ENCODE measurements at regions of chr21 and their contacts with region 1.

Region 1: GRCh38 chr21:34807146-34807880 is 138.5 kb downstream of the CLIC6 start:
- DNase-seq: peak; percentile 92
- H3K4me3 Mint-ChIP-seq: no peak overlapping the region
- H3K27ac Mint-ChIP-seq: peak overlapping the region; percentile 91
- H3K4me1 Mint-ChIP-seq: peaks cover 91% of the 10 kb centered on the region
- H3K27me3 Mint-ChIP-seq: no peaks in the 10 kb centered on the region

Region 2: DNA sequence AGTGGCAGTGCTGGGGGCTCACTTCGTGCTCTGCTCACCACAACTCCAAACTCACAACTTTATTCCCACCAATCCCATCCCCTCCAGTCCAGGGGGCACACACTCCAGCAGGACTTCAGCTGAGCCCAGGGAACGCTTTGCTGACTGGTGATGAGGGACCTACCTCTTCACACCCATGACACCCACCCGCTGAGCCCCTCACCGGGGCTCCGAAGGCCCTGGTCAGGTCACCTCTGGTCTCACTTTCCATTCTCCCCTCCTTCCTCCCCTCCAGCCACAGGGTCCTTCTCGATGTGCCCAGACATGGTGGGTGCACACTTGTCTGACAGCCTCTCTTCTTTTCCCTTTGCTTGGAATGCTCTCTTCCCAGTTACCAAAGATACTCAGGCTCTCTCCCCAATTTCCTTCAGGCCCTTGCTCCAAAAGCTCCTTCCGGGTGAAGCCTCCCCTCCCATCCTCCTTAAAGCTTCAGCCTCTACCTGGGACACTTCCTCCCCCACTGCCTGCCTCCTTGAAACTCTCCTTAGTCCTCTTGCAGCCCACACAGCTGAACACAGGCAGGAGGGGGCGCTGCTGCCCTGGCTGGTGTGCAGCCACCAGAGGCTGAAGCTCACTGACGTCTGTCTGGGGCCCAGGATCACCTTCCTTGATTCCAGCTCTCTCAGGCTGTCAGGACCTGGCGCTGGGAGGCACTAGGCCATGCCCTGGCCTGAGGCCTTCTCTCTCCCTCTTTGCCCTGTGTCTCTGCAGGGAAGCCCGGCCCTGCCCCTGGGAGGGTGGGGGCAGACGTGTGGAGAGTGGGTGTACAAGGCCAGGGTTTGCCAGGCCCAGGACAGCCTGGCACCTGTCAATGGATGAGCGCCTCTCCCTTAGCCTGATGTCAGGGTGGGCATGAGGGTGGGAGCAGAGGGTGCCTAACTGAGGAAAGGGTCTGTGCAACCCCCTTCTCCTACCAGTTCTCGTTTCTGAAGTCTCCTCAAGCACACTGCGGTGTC is 296.9 kb before region 1 on chr21:
- CTCF ChIA-PET with region 1: no interaction called
- intact Hi-C with region 1: no loop called
- DNase-seq: peak; percentile 68
- H3K4me3 Mint-ChIP-seq: no peak overlapping the region
- H3K27ac Mint-ChIP-seq: no peak overlapping the region
- H3K4me1 Mint-ChIP-seq: no peaks in the 10 kb centered on the region
- H3K27me3 Mint-ChIP-seq: no peaks in the 10 kb centered on the region

Region 3: DNA sequence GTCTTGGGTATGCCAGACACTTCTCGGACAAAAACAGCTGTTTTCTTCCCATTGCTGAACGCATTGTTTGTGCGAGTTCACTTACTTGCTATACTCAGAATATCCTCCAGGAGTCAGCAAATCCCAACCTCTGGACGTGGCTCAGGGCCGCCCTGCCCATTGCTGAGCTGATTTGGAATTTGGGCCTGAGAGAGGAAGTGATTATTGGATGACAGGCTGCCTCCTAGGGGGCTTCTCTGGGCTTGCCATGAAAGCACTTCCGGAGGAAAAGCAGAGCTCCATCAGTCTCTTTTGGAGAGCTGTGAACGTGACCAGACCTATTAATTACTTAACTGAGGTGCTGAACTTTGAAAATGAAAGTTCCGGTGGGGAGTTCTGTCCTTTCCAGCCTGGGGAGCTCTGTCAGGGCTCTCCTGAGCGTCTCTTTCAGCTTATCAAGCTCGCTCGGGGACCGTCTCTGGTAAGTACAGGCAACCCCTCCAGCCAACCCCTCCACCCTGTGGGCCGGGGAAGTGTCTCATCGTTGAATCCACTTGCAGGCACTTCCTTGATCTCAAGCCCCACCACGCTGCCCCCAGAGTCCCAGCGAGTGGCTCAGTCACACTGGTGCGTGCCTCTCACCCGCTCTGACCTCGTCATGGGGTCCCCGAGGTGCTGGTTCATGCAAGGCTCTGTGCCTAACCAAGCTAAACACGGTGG is 61.6 kb before region 1 on chr21:
- CTCF ChIA-PET with region 1: interaction called, 3 read pairs
- intact Hi-C with region 1: loop called (anchors 2 kb)
- DNase-seq: peak; percentile 74
- H3K4me3 Mint-ChIP-seq: peak overlapping the region; percentile 47
- H3K27ac Mint-ChIP-seq: peak overlapping the region; percentile 54
- H3K4me1 Mint-ChIP-seq: peaks cover 4% of the 10 kb centered on the region
- H3K27me3 Mint-ChIP-seq: no peaks in the 10 kb centered on the region

Region 4: DNA sequence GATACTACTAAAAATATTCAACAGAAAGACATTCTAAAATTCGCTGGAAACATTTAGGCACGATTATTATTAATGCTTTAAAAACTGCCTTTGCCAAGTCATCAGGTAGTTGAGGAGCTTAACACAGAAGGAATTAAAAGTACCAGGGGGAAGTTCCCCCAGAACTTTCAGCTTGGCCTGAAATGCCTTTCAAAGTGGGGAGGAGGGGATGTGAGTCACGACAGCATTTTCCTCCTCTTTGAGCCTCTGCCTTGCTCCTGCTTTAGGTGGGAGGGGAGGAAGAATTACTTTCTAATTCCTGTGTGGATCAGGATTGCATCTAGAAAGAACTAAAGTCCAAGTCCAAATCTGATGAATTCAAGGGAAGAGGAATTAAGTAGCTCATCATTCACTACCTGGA is 45.1 kb after region 1 on chr21:
- CTCF ChIA-PET with region 1: interaction called, 3 read pairs
- intact Hi-C with region 1: loop called (anchors 5 kb)
- DNase-seq: peak; percentile 37
- H3K4me3 Mint-ChIP-seq: no peak overlapping the region
- H3K27ac Mint-ChIP-seq: peak overlapping the region; percentile 71
- H3K4me1 Mint-ChIP-seq: peaks cover 23% of the 10 kb centered on the region
- H3K27me3 Mint-ChIP-seq: no peaks in the 10 kb centered on the region

Region 5: DNA sequence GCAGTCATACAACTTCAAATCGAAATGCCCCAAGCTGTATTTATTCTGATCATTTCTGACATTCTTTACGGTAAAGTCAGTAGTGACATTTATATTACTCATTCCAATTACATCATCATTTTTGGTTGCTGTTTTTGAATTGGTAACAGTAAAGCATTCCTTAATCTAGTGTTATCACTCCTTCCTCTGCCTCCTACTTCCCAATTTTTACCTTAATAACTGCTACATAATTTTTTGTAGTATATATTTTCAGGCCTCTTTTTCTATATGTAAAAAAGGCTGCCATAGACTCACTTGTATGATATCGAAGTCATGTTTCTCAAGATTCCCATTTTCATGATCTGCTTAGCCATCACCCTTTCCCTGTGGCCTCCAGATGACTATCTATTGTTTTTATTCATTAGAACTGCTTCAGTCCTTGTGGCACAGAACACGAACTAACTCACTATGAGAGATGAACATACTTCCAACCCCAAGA is 74.6 kb after region 1 on chr21:
- CTCF ChIA-PET with region 1: no interaction called
- intact Hi-C with region 1: loop called (anchors 1 kb)
- DNase-seq: no peak
- H3K4me3 Mint-ChIP-seq: peak overlapping the region; percentile 55
- H3K27ac Mint-ChIP-seq: peak overlapping the region; percentile 84
- H3K4me1 Mint-ChIP-seq: peaks cover 61% of the 10 kb centered on the region
- H3K27me3 Mint-ChIP-seq: no peaks in the 10 kb centered on the region

Region 6: GRCh38 chr21:34967509-34968289 is 160.4 kb after region 1 on chr21:
- CTCF ChIA-PET with region 1: no interaction called
- intact Hi-C with region 1: loop called (anchors 5 kb)
- DNase-seq: peak; percentile 73
- H3K4me3 Mint-ChIP-seq: peak overlapping the region; percentile 47
- H3K27ac Mint-ChIP-seq: peak overlapping the region; percentile 93
- H3K4me1 Mint-ChIP-seq: peaks cover 84% of the 10 kb centered on the region
- H3K27me3 Mint-ChIP-seq: no peaks in the 10 kb centered on the region

Region 7: DNA sequence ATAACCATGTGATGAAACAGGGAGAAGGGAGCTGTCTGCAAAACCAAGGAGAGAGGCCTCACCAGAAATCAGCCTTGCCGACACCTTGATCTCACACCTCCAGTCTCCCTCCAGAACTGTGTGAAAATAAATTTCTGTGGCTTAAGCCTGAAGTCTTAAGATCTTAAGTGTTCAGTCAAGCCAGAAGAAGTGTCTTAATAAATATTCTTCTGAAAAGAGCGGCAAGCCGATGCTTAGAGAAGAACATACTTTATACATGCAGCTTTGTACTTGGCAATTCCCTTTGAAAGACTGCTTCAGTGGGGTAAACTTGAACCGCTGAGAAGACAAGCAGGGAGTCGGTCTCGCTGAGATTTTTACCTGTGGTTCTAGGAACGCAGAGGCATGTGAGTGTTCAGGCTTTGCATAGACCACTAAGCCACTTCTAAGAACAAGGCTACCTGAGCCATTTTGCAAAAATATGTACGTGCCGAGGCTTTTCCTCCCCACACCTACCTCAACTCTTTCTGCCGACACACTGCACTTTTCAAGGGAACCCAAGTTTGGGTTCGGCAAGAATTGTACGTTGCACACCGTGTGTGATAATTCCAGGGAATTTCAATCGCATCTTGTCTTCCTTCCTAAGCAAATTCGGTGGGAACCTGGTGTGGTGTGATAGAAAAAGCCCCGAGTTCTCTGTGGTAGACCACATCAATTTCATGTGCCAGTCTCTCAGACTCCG is 238.4 kb after region 1 on chr21:
- CTCF ChIA-PET with region 1: no interaction called
- intact Hi-C with region 1: loop called (anchors 1 kb)
- DNase-seq: peak; percentile 59
- H3K4me3 Mint-ChIP-seq: peak overlapping the region; percentile 86
- H3K27ac Mint-ChIP-seq: peak overlapping the region; percentile 97
- H3K4me1 Mint-ChIP-seq: peaks cover 81% of the 10 kb centered on the region
- H3K27me3 Mint-ChIP-seq: no peaks in the 10 kb centered on the region

Region 8: GRCh38 chr21:35342440-35342839 is 535.1 kb after region 1 on chr21:
- CTCF ChIA-PET with region 1: no interaction called
- intact Hi-C with region 1: loop called (anchors 2 kb)
- DNase-seq: peak; percentile 68
- H3K4me3 Mint-ChIP-seq: peak overlapping the region; percentile 39
- H3K27ac Mint-ChIP-seq: peak overlapping the region; percentile 93
- H3K4me1 Mint-ChIP-seq: peaks cover 42% of the 10 kb centered on the region
- H3K27me3 Mint-ChIP-seq: peaks cover 4% of the 10 kb centered on the region

Measured in activated naive CD4-positive, alpha-beta T cell treated with anti-CD3 and anti-CD28 coated beads for 36 hours (primary cell).